A549 (cell line): ENCODE measurements at regions of chr10 and their contacts with region 1.

Region 1: GRCh38 chr10:97714048-97714371 is 480 bp downstream of the MARVELD1 start:
- DNase-seq: peak; percentile 82 to 88
- ATAC-seq: peak; percentile 77 to 78
- H3K4me3 ChIP-seq: peak overlapping the region; percentile 68
- H3K27ac ChIP-seq: peak overlapping the region; percentile 94 to 95
- H3K4me1 ChIP-seq: peaks cover 47% of the 10 kb centered on the region
- CTCF ChIP-seq: peak; percentile 40; the same call in 2 of the 3 replicates
- EP300 ChIP-seq: no peak
- POLR2A ChIP-seq: peak; percentile 55
- RAD21 ChIP-seq: no peak

Region 2: GRCh38 chr10:97686962-97687784 is 26.8 kb before region 1 on chr10 and contains the start of gene AVPI1:
- CTCF ChIA-PET with region 1: interaction called, 1,127 read pairs
- POLR2A ChIA-PET with region 1: interaction called, 53 read pairs
- DNase-seq: peak; percentile 95 to 99
- ATAC-seq: peak; percentile 78 to 87
- H3K4me3 ChIP-seq: peak within 1 kb of the TSS; percentile 92
- H3K27ac ChIP-seq: peak within 1 kb of the TSS; percentile 94
- H3K4me1 ChIP-seq: peaks cover 62% of the 10 kb centered on the region
- CTCF ChIP-seq: no peak
- EP300 ChIP-seq: peak; percentile 73 to 94; a peak in 4 of 5 replicates
- POLR2A ChIP-seq: peak; percentile 84
- RAD21 ChIP-seq: no peak
- polyA plus RNA-seq, gene AVPI1: 48.7 and 64.1 TPM in 2 replicates

Region 3: GRCh38 chr10:97701438-97702069 is 12.5 kb before region 1 on chr10:
- CTCF ChIA-PET with region 1: interaction called, 1,006 read pairs
- POLR2A ChIA-PET with region 1: interaction called, 10 read pairs
- DNase-seq: peak; percentile 74 to 88
- ATAC-seq: peak; percentile 94 to 97
- H3K4me3 ChIP-seq: no peak overlapping the region
- H3K27ac ChIP-seq: peak overlapping the region; percentile 63 to 74
- H3K4me1 ChIP-seq: peaks cover 12% of the 10 kb centered on the region
- CTCF ChIP-seq: peak; percentile 88
- EP300 ChIP-seq: no peak
- POLR2A ChIP-seq: no peak
- RAD21 ChIP-seq: peak; percentile 76 to 89

Region 4: DNA sequence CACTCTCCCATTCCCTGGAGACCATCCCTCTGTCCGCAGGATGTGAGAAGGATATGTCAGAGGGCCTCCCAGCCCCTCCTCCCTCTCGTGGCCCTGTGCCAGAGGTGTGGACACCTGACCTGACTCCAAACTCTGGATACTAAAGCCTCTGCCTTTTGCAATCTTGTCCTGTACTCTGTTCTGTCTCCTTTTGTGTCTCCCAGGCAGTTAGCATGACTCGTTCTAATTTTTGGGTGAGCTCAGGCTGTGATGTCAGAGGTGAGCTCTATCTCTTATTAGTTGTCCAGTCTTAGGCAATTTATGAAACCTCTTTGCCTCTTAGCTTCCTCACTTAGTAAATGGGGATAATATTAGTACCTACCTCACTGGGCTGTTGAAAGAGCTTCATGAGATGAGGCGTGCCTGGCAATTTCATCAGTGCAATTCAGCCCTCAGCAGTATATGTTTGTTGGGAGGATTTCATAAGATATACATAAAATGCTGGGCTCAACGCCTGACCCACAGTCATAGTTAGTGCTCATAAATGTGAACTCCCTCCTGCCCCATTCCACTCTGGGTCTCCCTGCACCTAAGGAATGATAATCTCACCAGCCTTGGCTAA is 10.4 kb after region 1 on chr10:
- CTCF ChIA-PET with region 1: interaction called, 1,006 read pairs
- POLR2A ChIA-PET with region 1: interaction called, 38 read pairs
- DNase-seq: peak in 1 of 2 experiments; percentile 50
- ATAC-seq: peak; percentile 60 to 81
- H3K4me3 ChIP-seq: no peak overlapping the region
- H3K27ac ChIP-seq: peak overlapping the region; percentile 43 to 45; a peak in 4 of 6 replicates
- H3K4me1 ChIP-seq: peaks cover 27% of the 10 kb centered on the region
- CTCF ChIP-seq: no peak
- EP300 ChIP-seq: no peak
- POLR2A ChIP-seq: no peak
- RAD21 ChIP-seq: no peak

Region 5: GRCh38 chr10:97731346-97732051 is 17.5 kb after region 1 on chr10:
- CTCF ChIA-PET with region 1: interaction called, 1,006 read pairs
- POLR2A ChIA-PET with region 1: interaction called, 20 read pairs
- DNase-seq: peak; percentile 60 to 81
- ATAC-seq: peak; percentile 86 to 89
- H3K4me3 ChIP-seq: no peak overlapping the region
- H3K27ac ChIP-seq: peak overlapping the region in 1 of 2 experiments; percentile 26; a peak in 2 of 6 replicates
- H3K4me1 ChIP-seq: peaks cover 7% of the 10 kb centered on the region; the same call in 1 of the 3 replicates
- CTCF ChIP-seq: peak; percentile 97
- EP300 ChIP-seq: no peak
- POLR2A ChIP-seq: no peak
- RAD21 ChIP-seq: peak; percentile 97 to 98

Region 6: DNA sequence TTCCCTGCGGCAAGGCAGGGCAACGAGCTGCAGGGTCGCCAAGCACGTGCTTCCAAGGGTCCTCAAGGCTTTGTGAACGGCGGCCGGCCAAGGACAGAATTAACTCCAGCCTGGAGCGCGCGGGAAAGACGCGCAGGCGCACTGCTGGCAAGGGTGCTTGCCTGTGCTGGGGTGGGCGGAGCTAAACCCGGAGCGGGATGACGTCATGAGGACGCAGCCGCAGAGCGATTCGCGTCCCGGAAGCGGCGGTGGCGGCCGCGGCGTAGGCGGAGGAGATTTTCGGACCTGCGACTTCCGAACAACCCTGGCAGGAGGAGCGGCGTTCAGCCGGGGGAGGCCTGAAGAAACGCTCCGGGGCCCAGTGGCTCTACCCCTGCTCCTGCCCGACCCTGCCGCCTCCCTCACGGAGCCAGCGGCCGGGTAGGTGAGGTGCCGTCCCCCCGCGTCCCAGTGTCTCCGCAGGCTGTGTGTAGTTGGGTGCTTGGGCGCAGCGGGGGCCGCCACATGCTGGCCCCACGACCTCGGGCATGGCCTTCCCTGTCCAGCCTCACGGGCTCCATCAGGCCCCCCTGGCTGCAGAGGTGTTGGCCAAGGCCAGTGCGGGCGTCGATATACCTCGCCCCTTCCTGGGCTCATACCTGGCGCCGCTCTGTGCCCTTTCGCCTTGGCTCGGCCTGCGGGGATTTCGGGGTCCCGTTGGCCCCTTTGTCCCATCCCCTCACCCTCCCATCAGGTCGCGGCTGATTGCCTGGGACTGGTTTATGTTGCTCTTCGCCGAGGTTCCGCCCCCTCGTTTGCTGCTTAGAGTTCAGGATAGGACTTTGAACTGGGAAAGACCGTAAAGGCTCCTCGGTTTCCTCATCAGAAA is 23.1 kb after region 1 on chr10 and contains the start of gene ZFYVE27:
- CTCF ChIA-PET with region 1: interaction called, 1,006 read pairs
- POLR2A ChIA-PET with region 1: interaction called, 12 read pairs
- DNase-seq: peak; percentile 96 to 98
- ATAC-seq: peak; percentile 78 to 91
- H3K4me3 ChIP-seq: peak within 1 kb of the TSS; percentile 86
- H3K27ac ChIP-seq: peak within 1 kb of the TSS; percentile 86 to 98
- H3K4me1 ChIP-seq: peaks cover 9% of the 10 kb centered on the region; the same call in 2 of the 3 replicates
- CTCF ChIP-seq: no peak
- EP300 ChIP-seq: no peak
- POLR2A ChIP-seq: peak; percentile 91
- RAD21 ChIP-seq: no peak
- polyA plus RNA-seq, gene ZFYVE27: 17.1 and 20.2 TPM in 2 replicates

Region 7: DNA sequence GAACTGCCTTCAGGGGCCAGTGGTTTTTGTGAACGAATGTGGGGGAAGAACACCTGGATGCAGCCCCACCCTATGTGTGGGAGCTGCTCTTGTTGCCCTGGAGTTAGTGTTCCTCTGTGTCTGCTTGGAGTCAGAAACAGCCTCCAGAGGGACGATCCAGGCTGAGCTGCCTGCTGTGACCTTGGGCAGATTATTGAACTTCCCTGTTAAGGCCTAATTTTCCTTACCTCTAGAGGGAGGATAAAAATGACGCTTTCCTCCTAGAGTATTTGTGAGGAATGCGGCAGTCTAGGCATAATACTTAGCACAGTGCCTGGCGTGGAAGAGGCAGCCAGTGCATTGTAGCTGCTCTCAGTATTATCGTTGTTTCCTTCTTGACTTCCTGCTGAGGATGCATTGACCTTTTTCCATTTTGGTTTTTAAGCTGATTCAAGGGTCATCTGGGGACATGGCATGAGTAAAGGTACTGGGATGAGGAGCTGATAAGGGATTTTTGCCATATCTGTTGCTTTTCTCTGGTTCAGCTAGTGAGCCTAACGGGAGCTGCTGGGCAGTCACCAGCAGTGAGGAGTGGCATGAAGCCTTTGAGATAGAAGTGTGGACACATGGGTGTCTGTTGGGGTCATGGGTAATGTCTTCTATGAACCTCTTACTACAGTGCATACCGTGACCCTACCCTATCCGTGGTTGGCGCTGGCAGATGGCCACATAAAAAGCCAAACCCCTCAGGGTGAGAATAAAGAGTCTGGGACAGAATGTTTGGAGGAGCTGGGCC is 29.3 kb after region 1 on chr10:
- CTCF ChIA-PET with region 1: interaction called, 10 read pairs
- POLR2A ChIA-PET with region 1: interaction called, 6 read pairs
- DNase-seq: no peak
- ATAC-seq: peak in 1 of 2 experiments; percentile 37; a peak in 3 of 6 replicates
- H3K4me3 ChIP-seq: no peak overlapping the region
- H3K27ac ChIP-seq: no peak overlapping the region
- H3K4me1 ChIP-seq: peaks cover 3% of the 10 kb centered on the region; the same call in 2 of the 3 replicates
- CTCF ChIP-seq: no peak
- EP300 ChIP-seq: no peak
- POLR2A ChIP-seq: no peak
- RAD21 ChIP-seq: no peak